ENCODE measurements at regions of chr5 and their contacts with region 1.

Region 1: DNA sequence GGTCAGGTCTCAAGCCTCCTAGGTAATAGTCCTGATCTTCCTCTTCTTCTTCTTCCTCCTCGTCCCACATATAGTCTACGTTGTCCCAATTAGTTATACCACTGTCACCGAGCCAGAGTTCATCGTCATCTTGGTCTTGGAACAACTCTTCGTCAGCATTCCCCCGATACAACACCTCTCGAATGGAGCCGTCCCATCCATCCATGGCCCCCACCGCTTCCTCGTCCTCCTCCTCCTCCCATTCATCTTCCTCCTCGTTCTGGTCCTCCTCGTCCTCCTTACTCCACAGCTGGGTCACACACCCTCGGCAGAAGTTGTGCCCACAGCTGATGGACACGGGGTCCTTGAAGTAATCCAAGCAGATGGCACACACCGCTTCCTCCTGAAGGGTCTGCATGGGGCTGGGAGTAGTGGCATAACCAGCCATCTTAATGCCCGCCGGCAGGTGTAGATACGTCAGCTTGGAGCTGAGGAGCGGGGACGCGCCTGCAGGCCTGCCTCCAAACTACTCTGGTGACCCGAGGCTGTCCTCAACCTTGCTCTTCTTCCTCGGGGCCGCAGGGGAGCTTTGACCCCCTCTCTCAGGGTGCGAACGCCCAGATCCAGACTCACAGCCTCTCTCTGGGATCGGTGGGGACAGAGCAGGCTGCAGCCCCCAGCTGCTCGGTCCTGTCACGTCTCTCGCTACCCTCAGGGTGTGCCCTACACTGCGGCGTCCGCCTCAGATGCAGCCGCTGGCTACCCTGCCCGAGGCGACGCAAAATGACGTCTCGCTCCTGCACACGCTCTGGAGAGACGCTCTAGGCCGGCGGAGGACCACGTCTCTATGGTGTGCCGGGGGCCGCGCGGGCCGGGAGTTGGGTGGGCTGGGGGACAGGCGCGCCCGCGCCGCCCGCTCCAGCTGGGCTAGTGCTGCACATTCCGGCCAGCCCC is at the start of gene TRIM52:
- DNase-seq: peak; percentile 77
- ATAC-seq: peak; percentile 92
- H3K4me3 ChIP-seq: peak within 1 kb of the TSS; percentile 95
- H3K27ac ChIP-seq: peak within 1 kb of the TSS; percentile 97
- H3K4me1 ChIP-seq: peaks cover 3% of the 10 kb centered on the region; the same call in 1 of the 2 replicates
- H3K27me3 ChIP-seq: no peaks in the 10 kb centered on the region
- CTCF ChIP-seq: peak in 1 of 3 experiments; percentile 19; a peak in 1 of 6 replicates
- EP300 ChIP-seq: no peak
- POLR2A ChIP-seq: peak; percentile 99
- RAD21 ChIP-seq: no peak
- polyA plus RNA-seq, gene TRIM52: 1.4 to 3.4 TPM

Region 2: DNA sequence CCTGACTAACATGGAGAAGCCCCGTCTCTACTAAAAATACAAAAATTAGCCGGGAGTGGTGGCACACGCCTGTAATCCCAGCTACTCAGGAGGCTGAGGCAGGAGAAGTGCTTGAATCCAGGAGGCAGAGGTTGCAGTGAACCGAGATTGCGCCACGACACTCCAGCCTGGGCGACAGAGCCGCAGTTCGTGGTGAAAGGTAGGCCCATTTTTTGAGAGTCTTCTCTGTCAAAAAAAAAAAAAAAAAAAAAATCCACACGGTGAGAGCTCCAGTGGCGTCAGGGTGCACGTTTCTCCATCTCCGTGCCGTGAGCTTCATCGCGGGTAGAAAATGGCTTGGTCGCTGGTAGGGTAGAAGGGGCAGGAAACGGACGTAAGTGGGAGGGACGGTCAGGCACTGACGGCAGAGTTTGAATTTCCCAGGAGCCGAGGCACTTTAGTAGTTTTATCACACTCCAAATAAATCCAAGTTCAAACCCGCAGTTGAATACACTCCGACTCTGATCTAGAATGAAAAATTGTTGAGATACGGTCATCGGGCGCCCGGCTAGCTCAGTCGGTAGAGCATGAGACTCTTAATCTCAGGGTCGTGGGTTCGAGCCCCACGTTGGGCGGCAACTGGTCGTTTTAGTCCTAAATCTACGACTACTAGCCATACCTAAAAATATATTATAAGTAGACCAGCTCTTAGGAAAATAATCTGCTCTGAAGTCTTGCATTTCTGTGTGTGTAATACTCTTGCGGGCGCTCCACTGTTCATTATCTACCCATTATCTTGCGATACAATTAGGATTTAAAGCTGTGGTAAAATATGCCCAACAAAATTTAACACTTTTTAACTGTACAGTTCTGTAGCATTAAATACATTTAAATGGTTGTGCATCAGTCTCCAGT is 53.2 kb before region 1 on chr5:
- CTCF ChIA-PET with region 1: interaction called, 7 read pairs
- POLR2A ChIA-PET with region 1: interaction called, 5 read pairs
- RAD21 ChIA-PET with region 1: interaction called, 12 read pairs
- SMC1A ChIA-PET with region 1: interaction called, 4 read pairs
- in situ Hi-C with region 1: no loop called
- intact Hi-C with region 1: no loop called
- DNase-seq: no peak
- ATAC-seq: peak; percentile 59
- H3K4me3 ChIP-seq: peak overlapping the region; percentile 83
- H3K27ac ChIP-seq: peak overlapping the region; percentile 51
- H3K4me1 ChIP-seq: peaks cover 14% of the 10 kb centered on the region
- H3K27me3 ChIP-seq: peaks cover 4 to 8% of the 10 kb centered on the region in 2 experiments; a peak in 3 of 4 replicates
- CTCF ChIP-seq: no peak
- EP300 ChIP-seq: no peak
- POLR2A ChIP-seq: no peak
- RAD21 ChIP-seq: no peak

Region 3: GRCh38 chr5:181243512-181244343 is 16.9 kb before region 1 on chr5 and contains the start of gene RACK1:
- CTCF ChIA-PET with region 1: interaction called, 6 read pairs
- POLR2A ChIA-PET with region 1: interaction called, 19 read pairs
- RAD21 ChIA-PET with region 1: interaction called, 13 read pairs
- SMC1A ChIA-PET with region 1: interaction called, 25 read pairs
- in situ Hi-C with region 1: no loop called
- intact Hi-C with region 1: loop called (anchors 2 kb)
- DNase-seq: peak; percentile 89
- ATAC-seq: peak; percentile 66
- H3K4me3 ChIP-seq: peak within 1 kb of the TSS; percentile 98
- H3K27ac ChIP-seq: peak within 1 kb of the TSS; percentile 92
- H3K4me1 ChIP-seq: peaks cover 27% of the 10 kb centered on the region
- H3K27me3 ChIP-seq: no peaks in the 10 kb centered on the region
- CTCF ChIP-seq: no peak
- EP300 ChIP-seq: no peak
- POLR2A ChIP-seq: peak; percentile 99
- RAD21 ChIP-seq: no peak
- polyA plus RNA-seq, gene RACK1: 3,729 to 5,412 TPM